HCT116 (cell line): ENCODE measurements at regions of chr5 and their contacts with region 1.

Region 1: DNA sequence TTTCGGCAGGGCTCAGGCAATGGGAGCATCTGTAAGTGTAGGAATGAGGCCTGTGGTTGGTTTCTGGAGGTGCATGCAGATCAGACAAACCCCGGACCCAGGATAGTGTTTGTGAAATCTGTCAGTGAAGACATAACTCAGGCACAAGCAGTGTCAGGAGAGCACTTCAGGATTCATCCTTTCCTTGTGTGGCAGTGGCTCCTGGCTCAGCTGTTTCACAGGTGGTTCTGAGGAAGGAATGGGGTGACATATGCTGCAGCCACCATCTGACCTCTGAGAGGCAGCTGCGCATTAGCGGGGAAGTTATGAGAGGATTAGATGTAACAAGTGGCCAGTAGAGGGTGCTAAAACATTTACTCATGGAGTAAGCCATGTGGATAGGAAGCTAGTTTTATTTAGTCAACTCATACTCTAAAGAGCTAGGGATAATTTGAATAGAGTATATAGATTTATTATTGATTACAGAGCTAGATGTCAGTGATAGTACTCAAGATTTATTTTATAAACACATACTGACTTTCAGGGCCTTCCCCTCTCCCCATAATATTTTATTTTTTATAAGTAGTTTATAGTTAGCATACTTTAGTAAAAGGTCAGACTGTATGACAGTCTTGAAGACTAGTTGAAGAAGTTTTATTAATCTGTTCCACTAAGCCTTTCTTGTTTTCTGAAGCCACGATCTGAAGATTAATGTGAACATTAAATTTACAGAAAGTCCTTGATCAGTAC is 28.4 kb downstream of the NNT start:
- DNase-seq: peak; percentile 69
- ATAC-seq: peak; percentile 94
- H3K4me3 ChIP-seq: no peak overlapping the region
- H3K27ac ChIP-seq: no peak overlapping the region
- H3K4me1 ChIP-seq: peaks cover 0 to 2% of the 10 kb centered on the region in 2 experiments; a peak in 1 of 4 replicates
- H3K27me3 ChIP-seq: no peaks in the 10 kb centered on the region
- CTCF ChIP-seq: peak; percentile 56 to 83 (median 64); a peak in 5 of 6 replicates
- POLR2A ChIP-seq: no peak
- RAD21 ChIP-seq: peak; percentile 72

Region 2: DNA sequence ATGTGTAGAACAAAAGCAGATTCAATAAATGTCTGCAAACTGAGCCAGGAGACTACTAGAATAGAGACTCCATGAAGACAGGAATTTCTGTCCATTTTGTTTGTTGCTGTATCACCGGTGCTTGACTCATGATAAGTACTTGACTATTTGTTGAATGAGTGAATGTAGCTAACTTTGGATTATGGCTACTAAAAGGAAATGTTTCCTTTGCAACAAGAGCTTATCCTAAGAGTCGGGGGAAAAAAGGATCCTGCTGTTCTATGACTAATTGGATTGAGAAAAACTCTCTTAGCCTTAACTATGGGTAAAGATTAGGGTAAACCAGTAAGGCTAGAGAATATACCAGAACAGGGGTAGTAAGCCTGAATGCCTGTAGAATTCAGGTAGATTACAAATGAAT is 78.0 kb before region 1 on chr5:
- CTCF ChIA-PET with region 1: no interaction called
- POLR2A ChIA-PET with region 1: no interaction called
- RAD21 ChIA-PET with region 1: no interaction called
- intact Hi-C with region 1: no loop called
- DNase-seq: no peak
- ATAC-seq: no peak
- H3K4me3 ChIP-seq: no peak overlapping the region
- H3K27ac ChIP-seq: no peak overlapping the region
- H3K4me1 ChIP-seq: peaks cover 10 to 15% of the 10 kb centered on the region in 2 experiments
- H3K27me3 ChIP-seq: no peaks in the 10 kb centered on the region
- CTCF ChIP-seq: no peak
- POLR2A ChIP-seq: no peak
- RAD21 ChIP-seq: no peak

Region 3: GRCh38 chr5:43613370-43613769 is 18.0 kb before region 1 on chr5:
- CTCF ChIA-PET with region 1: interaction called, 12 read pairs
- POLR2A ChIA-PET with region 1: no interaction called
- RAD21 ChIA-PET with region 1: no interaction called
- intact Hi-C with region 1: no loop called
- DNase-seq: no peak
- ATAC-seq: no peak
- H3K4me3 ChIP-seq: no peak overlapping the region
- H3K27ac ChIP-seq: no peak overlapping the region
- H3K4me1 ChIP-seq: no peaks in the 10 kb centered on the region
- H3K27me3 ChIP-seq: no peaks in the 10 kb centered on the region
- CTCF ChIP-seq: no peak
- POLR2A ChIP-seq: no peak
- RAD21 ChIP-seq: no peak

Region 4: GRCh38 chr5:43646992-43647391 is 15.6 kb after region 1 on chr5:
- CTCF ChIA-PET with region 1: interaction called, 21 read pairs
- POLR2A ChIA-PET with region 1: no interaction called
- RAD21 ChIA-PET with region 1: interaction called in 1 of 2 experiments, 3 read pairs
- intact Hi-C with region 1: no loop called
- DNase-seq: no peak
- ATAC-seq: no peak; the same call in 1 of the 2 replicates
- H3K4me3 ChIP-seq: no peak overlapping the region
- H3K27ac ChIP-seq: no peak overlapping the region
- H3K4me1 ChIP-seq: no peaks in the 10 kb centered on the region
- H3K27me3 ChIP-seq: no peaks in the 10 kb centered on the region
- CTCF ChIP-seq: peak in 2 of 3 experiments; percentile 36 to 40; a peak in 4 of 6 replicates
- POLR2A ChIP-seq: no peak
- RAD21 ChIP-seq: no peak

Region 5: DNA sequence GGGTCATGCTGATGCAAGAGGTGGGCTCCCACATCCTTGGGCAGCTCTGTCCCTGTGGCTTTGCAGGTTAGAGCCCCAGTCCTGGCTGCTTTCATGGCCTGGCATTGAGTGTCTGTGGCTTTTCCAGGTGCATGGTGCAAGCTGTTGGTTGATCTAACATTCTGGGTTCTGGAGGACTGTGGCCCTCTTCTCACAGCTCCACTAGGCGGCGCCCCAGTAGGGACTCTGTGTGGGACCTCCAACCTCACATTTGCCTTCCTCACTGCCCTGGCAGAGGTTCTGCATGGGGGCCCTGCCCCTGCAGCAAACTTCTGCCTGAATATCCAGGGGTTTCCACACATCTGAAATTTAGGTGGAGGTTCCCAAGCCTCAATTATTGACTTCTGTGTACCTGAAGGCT is 121.7 kb after region 1 on chr5:
- CTCF ChIA-PET with region 1: no interaction called
- POLR2A ChIA-PET with region 1: no interaction called
- RAD21 ChIA-PET with region 1: no interaction called
- intact Hi-C with region 1: no loop called
- DNase-seq: no peak
- ATAC-seq: no peak
- H3K4me3 ChIP-seq: no peak overlapping the region
- H3K27ac ChIP-seq: no peak overlapping the region
- H3K4me1 ChIP-seq: no peaks in the 10 kb centered on the region
- H3K27me3 ChIP-seq: no peaks in the 10 kb centered on the region
- CTCF ChIP-seq: peak in 2 of 3 experiments; percentile 17; a peak in 2 of 6 replicates
- POLR2A ChIP-seq: no peak
- RAD21 ChIP-seq: no peak

Region 6: GRCh38 chr5:43854697-43855292 is 223.4 kb after region 1 on chr5:
- CTCF ChIA-PET with region 1: no interaction called
- POLR2A ChIA-PET with region 1: no interaction called
- RAD21 ChIA-PET with region 1: no interaction called
- intact Hi-C with region 1: no loop called
- DNase-seq: no peak
- ATAC-seq: no peak
- H3K4me3 ChIP-seq: no peak overlapping the region
- H3K27ac ChIP-seq: no peak overlapping the region
- H3K4me1 ChIP-seq: no peaks in the 10 kb centered on the region
- H3K27me3 ChIP-seq: no peaks in the 10 kb centered on the region
- CTCF ChIP-seq: no peak
- POLR2A ChIP-seq: no peak
- RAD21 ChIP-seq: no peak

Region 7: GRCh38 chr5:44332285-44332971 is 701.1 kb after region 1 on chr5:
- CTCF ChIA-PET with region 1: interaction called, 24 read pairs
- POLR2A ChIA-PET with region 1: no interaction called
- RAD21 ChIA-PET with region 1: no interaction called
- intact Hi-C with region 1: loop called (anchors 10 kb)
- DNase-seq: peak; percentile 39
- ATAC-seq: peak; percentile 74
- H3K4me3 ChIP-seq: no peak overlapping the region
- H3K27ac ChIP-seq: no peak overlapping the region
- H3K4me1 ChIP-seq: no peaks in the 10 kb centered on the region
- H3K27me3 ChIP-seq: no peaks in the 10 kb centered on the region
- CTCF ChIP-seq: peak; percentile 27 to 75 (median 60); a peak in 5 of 6 replicates
- POLR2A ChIP-seq: no peak
- RAD21 ChIP-seq: peak; percentile 55; the same call in 1 of the 2 replicates